Caco-2 (cell line): ENCODE measurements at regions of chr11 and their contacts with region 1.

Region 1: DNA sequence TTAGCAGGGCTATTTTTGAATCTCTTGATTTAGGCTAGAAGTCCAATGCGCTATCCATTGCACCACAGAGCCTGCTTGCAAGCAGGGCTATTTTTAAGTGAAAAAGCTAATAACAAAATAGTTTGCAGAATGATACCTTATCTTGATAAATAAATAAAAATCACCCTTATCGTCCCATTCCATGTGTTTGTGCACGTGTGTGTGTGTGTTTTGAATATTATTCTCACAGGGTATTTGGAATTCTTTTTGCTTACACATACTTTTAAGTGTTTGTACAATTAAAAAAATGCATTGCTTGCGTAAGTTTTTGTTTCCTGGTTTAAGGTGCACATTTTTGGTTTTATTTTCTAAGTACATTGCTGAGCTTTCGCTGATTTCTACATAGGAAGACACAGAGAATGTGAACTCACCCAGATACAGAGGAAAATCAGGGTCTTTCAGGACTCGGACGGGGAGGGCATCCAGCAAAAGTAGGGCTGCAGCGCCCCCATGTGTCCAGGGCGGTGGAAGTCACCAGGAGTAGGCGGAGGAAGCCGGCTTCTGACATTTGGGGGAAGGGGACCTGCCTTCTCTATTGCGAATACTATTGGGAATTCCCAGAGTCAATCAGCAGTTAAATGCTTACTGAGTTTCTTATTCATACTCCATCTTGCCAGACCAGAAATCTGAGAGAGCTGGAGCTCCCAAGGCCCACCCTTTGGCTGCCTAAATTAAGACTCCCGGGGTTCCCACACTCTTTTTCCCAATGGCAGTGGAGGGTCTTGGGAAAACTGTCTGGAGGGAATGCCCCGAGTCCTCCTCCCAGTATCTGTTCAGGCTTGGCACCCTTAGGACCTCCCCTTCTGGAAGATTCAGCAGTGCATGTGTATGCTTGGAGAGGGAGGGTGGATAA is 27.2 kb downstream of the SLC1A2 start:
- DNase-seq: peak; percentile 81 to 94
- H3K4me3 ChIP-seq: no peak overlapping the region
- H3K4me3 Mint-ChIP-seq: peak overlapping the region; percentile 12
- H3K27ac Mint-ChIP-seq: no peak overlapping the region
- H3K4me1 ChIP-seq: peaks cover 24% of the 10 kb centered on the region; the same call in 1 of the 2 replicates
- H3K4me1 Mint-ChIP-seq: peaks cover 12% of the 10 kb centered on the region
- H3K27me3 ChIP-seq: no peaks in the 10 kb centered on the region
- H3K27me3 Mint-ChIP-seq: no peaks in the 10 kb centered on the region
- CTCF ChIP-seq: peak; percentile 94 to 95

Region 2: GRCh38 chr11:34512840-34513681 is 879.1 kb before region 1 on chr11:
- CTCF ChIA-PET with region 1: no interaction called
- POLR2A ChIA-PET with region 1: no interaction called
- intact Hi-C with region 1: loop called (anchors 1 kb)
- DNase-seq: peak; percentile 67 to 75
- H3K4me3 ChIP-seq: no peak overlapping the region
- H3K4me3 Mint-ChIP-seq: peak overlapping the region; percentile 9
- H3K27ac Mint-ChIP-seq: no peak overlapping the region
- H3K4me1 ChIP-seq: peaks cover 17% of the 10 kb centered on the region
- H3K4me1 Mint-ChIP-seq: peaks cover 11% of the 10 kb centered on the region
- H3K27me3 ChIP-seq: no peaks in the 10 kb centered on the region
- H3K27me3 Mint-ChIP-seq: peaks cover 1% of the 10 kb centered on the region
- CTCF ChIP-seq: peak; percentile 78 to 92

Region 3: DNA sequence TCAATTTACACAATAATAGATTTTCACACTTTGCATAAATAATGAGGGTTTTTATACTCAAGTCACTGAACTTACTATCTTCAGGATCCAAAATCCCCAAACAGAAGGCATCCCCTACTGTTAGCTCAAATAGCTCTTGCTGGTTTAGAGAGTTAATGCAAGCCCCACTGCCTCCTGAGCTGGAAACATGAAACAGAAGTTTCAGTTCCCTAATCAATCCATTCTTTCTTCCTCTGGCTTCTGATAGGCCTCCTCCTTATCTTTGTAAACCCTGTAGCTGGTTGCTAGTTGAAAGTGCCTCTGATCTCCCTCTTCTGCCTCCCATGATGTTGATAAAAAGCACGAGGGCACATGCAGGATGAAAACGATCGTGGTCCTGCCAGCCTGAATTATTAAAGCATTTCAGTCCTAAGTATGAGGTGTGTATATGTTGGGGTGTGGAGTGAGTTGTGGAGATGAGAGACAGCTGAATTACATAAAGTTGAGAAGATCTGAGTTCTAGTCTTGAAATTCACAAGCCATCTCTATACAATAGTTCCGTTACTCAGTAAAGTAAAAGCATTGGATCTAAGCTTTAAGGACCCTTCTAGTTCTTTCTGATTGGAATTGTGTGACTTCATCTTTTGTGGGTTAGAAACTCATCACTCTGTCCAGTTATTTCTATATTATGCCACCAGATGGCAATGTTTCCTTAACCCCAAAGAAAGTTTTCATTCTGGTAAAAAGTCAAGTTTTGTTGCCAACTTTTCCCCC is 806.3 kb before region 1 on chr11:
- CTCF ChIA-PET with region 1: no interaction called
- POLR2A ChIA-PET with region 1: no interaction called
- intact Hi-C with region 1: loop called (anchors 1 kb)
- DNase-seq: peak in 1 of 2 experiments; percentile 55
- H3K4me3 ChIP-seq: no peak overlapping the region
- H3K4me3 Mint-ChIP-seq: peak overlapping the region; percentile 39
- H3K27ac Mint-ChIP-seq: peak overlapping the region; percentile 61
- H3K4me1 ChIP-seq: peaks cover 28% of the 10 kb centered on the region
- H3K4me1 Mint-ChIP-seq: peaks cover 30% of the 10 kb centered on the region
- H3K27me3 ChIP-seq: 0 out of 2 replicates have a peak, but pooled peaks cover 1% of the 10 kb centered on the region
- H3K27me3 Mint-ChIP-seq: no peaks in the 10 kb centered on the region
- CTCF ChIP-seq: peak; percentile 37 to 81

Region 4: DNA sequence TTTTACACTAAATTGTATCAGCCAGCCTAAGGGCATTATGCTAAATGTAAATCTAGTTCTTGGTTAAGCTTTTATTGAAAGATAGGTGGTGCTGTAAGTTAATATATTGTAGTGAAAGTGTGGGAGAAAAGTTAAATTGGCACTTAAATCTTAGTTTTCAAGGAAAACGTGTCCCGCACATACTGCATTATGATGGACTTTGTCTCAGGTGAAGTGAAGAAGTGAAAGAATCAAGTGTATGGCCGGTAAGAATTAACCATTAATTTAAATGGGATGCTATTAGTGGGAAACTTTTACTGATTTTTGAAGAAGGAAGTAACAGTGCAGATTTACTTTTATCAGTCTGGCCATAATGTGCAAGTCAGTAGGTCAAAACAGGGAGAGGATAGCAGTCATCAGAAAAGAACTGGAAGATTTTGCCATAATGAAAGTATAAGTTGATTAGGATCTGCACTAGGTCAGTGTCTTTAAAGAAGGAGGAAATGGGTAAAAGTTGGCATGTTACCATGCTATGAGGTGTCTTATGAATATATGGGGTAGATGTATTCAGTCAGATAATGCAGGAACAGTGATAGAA is 394.1 kb before region 1 on chr11:
- CTCF ChIA-PET with region 1: interaction called, 3 read pairs
- POLR2A ChIA-PET with region 1: no interaction called
- intact Hi-C with region 1: loop called (anchors 1 kb)
- DNase-seq: no peak
- H3K4me3 ChIP-seq: no peak overlapping the region
- H3K4me3 Mint-ChIP-seq: no peak overlapping the region
- H3K27ac Mint-ChIP-seq: no peak overlapping the region
- H3K4me1 ChIP-seq: no peaks in the 10 kb centered on the region
- H3K4me1 Mint-ChIP-seq: no peaks in the 10 kb centered on the region
- H3K27me3 ChIP-seq: no peaks in the 10 kb centered on the region
- H3K27me3 Mint-ChIP-seq: no peaks in the 10 kb centered on the region
- CTCF ChIP-seq: peak; percentile 10 to 28

Region 5: DNA sequence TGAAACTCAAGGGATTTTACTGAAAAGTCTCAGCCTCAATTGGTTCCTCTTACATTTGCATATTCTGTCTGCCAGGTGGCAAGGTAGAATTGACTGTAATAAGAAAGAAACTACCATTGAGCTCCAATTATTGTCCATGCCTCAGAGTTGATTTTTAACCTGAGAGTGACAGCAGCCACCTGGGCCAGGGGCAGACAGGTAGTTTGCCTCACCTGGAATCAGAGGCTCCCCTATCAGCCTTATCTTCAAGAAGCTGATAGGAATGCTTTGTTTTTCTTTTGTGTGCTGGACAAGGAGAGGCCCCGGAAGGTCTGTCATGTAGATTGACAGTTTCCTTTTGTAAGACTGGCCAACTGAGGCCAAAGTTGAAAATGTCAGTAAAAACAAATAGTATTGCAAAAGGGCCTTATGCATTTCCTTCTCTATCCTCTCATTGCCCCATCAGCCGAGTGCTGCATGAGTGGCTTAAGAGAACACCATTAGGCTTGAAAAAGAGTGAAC is 219.1 kb before region 1 on chr11:
- CTCF ChIA-PET with region 1: no interaction called
- POLR2A ChIA-PET with region 1: no interaction called
- intact Hi-C with region 1: loop called (anchors 5 kb)
- DNase-seq: peak; percentile 91 to 93
- H3K4me3 ChIP-seq: no peak overlapping the region
- H3K4me3 Mint-ChIP-seq: no peak overlapping the region
- H3K27ac Mint-ChIP-seq: peak overlapping the region; percentile 59
- H3K4me1 ChIP-seq: peaks cover 46% of the 10 kb centered on the region
- H3K4me1 Mint-ChIP-seq: peaks cover 16% of the 10 kb centered on the region
- H3K27me3 ChIP-seq: no peaks in the 10 kb centered on the region
- H3K27me3 Mint-ChIP-seq: no peaks in the 10 kb centered on the region
- CTCF ChIP-seq: no peak

Region 6: GRCh38 chr11:35237860-35238715 is 154.1 kb before region 1 on chr11:
- CTCF ChIA-PET with region 1: no interaction called
- POLR2A ChIA-PET with region 1: no interaction called
- intact Hi-C with region 1: loop called (anchors 5 kb)
- DNase-seq: peak; percentile 51 to 71
- H3K4me3 ChIP-seq: no peak overlapping the region
- H3K4me3 Mint-ChIP-seq: no peak overlapping the region
- H3K27ac Mint-ChIP-seq: peak overlapping the region; percentile 11
- H3K4me1 ChIP-seq: peaks cover 4% of the 10 kb centered on the region; the same call in 1 of the 2 replicates
- H3K4me1 Mint-ChIP-seq: peaks cover 8% of the 10 kb centered on the region
- H3K27me3 ChIP-seq: no peaks in the 10 kb centered on the region
- H3K27me3 Mint-ChIP-seq: no peaks in the 10 kb centered on the region
- CTCF ChIP-seq: peak; percentile 72 to 85

Region 7: DNA sequence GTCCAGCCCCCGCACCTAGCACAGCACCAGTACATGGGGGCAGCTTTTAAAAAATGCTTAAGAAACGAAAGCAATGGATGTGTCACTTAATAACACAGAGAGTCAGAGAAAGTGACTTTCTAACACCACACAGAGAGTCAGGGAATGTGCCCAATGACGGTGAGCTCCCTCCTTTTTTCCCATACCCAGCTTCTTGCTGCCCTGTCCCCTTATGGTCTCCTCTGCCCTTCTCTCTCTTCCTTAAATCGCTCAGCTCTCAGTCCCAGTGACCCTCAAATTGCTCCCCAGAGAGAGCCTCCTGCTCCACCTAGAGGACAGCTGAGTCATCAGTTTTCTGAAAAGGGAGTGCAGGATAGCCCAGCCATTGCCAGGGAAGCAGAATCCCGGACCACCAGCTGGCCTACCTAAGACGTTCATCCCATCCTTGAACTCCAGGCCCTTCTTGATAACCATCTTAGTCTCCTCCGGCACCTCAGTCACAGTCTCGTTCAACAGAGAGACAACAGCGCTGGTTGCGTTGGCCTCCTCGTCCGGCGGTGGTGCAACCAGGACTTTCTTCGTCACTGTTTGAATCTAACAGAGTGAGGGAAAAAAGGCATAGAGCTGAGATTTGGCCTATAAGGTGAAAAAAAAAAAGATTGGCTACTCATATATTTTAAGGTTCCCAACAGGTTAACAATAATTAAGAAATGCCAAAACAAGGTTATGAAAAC is 86.3 kb before region 1 on chr11:
- CTCF ChIA-PET with region 1: interaction called, 4 read pairs
- POLR2A ChIA-PET with region 1: no interaction called
- intact Hi-C with region 1: loop called (anchors 1 kb)
- DNase-seq: peak; percentile 53 to 62
- H3K4me3 ChIP-seq: no peak overlapping the region
- H3K4me3 Mint-ChIP-seq: no peak overlapping the region
- H3K27ac Mint-ChIP-seq: peak overlapping the region; percentile 56
- H3K4me1 ChIP-seq: no peaks in the 10 kb centered on the region
- H3K4me1 Mint-ChIP-seq: peaks cover 7% of the 10 kb centered on the region
- H3K27me3 ChIP-seq: no peaks in the 10 kb centered on the region
- H3K27me3 Mint-ChIP-seq: peaks cover 2% of the 10 kb centered on the region
- CTCF ChIP-seq: peak; percentile 68 to 85

Region 8: GRCh38 chr11:35478471-35479091 is 86.4 kb after region 1 on chr11:
- CTCF ChIA-PET with region 1: no interaction called
- POLR2A ChIA-PET with region 1: no interaction called
- intact Hi-C with region 1: no loop called
- DNase-seq: no peak
- H3K4me3 ChIP-seq: no peak overlapping the region
- H3K4me3 Mint-ChIP-seq: no peak overlapping the region
- H3K27ac Mint-ChIP-seq: no peak overlapping the region
- H3K4me1 ChIP-seq: no peaks in the 10 kb centered on the region
- H3K4me1 Mint-ChIP-seq: no peaks in the 10 kb centered on the region
- H3K27me3 ChIP-seq: no peaks in the 10 kb centered on the region
- H3K27me3 Mint-ChIP-seq: no peaks in the 10 kb centered on the region
- CTCF ChIP-seq: no peak